ENCODE measurements at regions of chr20 and their contacts with region 1.

Region 1: GRCh38 chr20:45647441-45648050 is 16.5 kb upstream of the WFDC9 start:
- DNase-seq: no peak
- H3K4me3 ChIP-seq: no peak overlapping the region
- H3K4me3 Mint-ChIP-seq: no peak overlapping the region
- H3K27ac Mint-ChIP-seq: no peak overlapping the region
- H3K4me1 ChIP-seq: peaks cover 19% of the 10 kb centered on the region
- H3K4me1 Mint-ChIP-seq: peaks cover 17% of the 10 kb centered on the region
- H3K27me3 ChIP-seq: no peaks in the 10 kb centered on the region
- H3K27me3 Mint-ChIP-seq: peaks cover 7% of the 10 kb centered on the region
- CTCF ChIP-seq: no peak

Region 2: DNA sequence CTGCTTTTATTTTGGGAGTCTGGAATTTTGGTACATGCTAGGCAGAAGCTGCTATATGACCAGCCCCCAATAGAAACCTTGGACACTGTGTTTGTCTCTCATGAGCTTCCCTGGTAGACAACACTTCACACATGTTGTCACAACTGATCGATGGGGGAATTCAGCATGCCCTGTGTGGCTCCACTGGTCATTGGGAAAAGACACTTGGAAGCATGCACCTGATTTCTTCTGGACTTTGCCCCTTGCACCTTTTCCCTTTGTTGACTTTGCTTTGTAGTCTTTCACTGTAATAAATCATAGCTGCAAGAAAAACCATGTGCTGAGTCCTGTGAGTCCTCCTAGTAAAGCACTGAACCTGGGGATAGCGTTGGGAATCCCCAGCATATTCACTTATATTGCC is 26.0 kb before region 1 on chr20:
- CTCF ChIA-PET with region 1: no interaction called
- POLR2A ChIA-PET with region 1: no interaction called
- intact Hi-C with region 1: loop called (anchors 2 kb)
- DNase-seq: peak; percentile 79 to 81
- H3K4me3 ChIP-seq: no peak overlapping the region
- H3K4me3 Mint-ChIP-seq: peak overlapping the region; percentile 2
- H3K27ac Mint-ChIP-seq: no peak overlapping the region
- H3K4me1 ChIP-seq: peaks cover 18% of the 10 kb centered on the region
- H3K4me1 Mint-ChIP-seq: peaks cover 19% of the 10 kb centered on the region
- H3K27me3 ChIP-seq: no peaks in the 10 kb centered on the region
- H3K27me3 Mint-ChIP-seq: no peaks in the 10 kb centered on the region
- CTCF ChIP-seq: no peak

Measured in Caco-2 (cell line).